AG04450 (cell line): ENCODE measurements at regions of chr10 and their contacts with region 1.

Region 1: DNA sequence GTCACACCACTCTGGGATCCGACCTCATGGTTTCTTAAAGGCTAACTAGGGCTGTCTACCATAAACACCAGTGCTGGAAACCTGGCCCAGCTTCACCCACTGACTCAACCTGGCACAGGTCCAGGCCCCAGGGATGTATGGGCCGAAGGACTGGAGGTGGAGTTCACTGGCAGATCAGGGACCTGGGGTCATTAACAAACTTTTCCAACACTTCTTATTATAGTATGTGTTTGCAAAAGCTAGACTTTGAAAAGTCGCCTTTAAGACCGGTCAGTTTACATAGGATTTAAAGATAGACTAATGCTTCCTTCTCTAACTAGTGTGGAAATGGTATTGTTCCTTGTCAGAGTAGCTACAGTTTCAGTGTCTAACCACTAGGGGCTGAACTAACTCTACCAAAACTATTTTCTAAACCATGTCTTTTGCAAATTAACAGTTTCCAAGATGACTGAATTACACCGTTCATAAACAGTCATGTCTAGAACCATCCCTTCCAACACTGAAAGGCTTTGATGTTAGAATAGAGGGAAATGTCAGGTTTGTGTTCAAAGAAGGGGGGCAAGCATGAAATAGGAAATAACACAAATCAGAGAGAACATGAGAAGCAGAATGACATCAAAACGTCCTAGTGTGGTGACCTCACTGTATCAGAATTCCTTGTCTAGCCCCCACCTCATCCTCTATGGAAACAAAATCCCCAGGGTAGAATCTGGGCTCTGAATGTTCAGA is 29.7 kb downstream of the STN1 start:
- DNase-seq: peak; percentile 73
- H3K4me3 ChIP-seq: no peak overlapping the region
- H3K27ac ChIP-seq: peak overlapping the region; percentile 33
- H3K27me3 ChIP-seq: no peaks in the 10 kb centered on the region
- CTCF ChIP-seq: peak; percentile 92

Region 2: GRCh38 chr10:102083541-102083940 is 1804.7 kb before region 1 on chr10:
- CTCF ChIA-PET with region 1: no interaction called
- POLR2A ChIA-PET with region 1: no interaction called
- DNase-seq: no peak
- H3K4me3 ChIP-seq: no peak overlapping the region
- H3K27ac ChIP-seq: no peak overlapping the region
- H3K27me3 ChIP-seq: no peaks in the 10 kb centered on the region
- CTCF ChIP-seq: no peak

Region 3: DNA sequence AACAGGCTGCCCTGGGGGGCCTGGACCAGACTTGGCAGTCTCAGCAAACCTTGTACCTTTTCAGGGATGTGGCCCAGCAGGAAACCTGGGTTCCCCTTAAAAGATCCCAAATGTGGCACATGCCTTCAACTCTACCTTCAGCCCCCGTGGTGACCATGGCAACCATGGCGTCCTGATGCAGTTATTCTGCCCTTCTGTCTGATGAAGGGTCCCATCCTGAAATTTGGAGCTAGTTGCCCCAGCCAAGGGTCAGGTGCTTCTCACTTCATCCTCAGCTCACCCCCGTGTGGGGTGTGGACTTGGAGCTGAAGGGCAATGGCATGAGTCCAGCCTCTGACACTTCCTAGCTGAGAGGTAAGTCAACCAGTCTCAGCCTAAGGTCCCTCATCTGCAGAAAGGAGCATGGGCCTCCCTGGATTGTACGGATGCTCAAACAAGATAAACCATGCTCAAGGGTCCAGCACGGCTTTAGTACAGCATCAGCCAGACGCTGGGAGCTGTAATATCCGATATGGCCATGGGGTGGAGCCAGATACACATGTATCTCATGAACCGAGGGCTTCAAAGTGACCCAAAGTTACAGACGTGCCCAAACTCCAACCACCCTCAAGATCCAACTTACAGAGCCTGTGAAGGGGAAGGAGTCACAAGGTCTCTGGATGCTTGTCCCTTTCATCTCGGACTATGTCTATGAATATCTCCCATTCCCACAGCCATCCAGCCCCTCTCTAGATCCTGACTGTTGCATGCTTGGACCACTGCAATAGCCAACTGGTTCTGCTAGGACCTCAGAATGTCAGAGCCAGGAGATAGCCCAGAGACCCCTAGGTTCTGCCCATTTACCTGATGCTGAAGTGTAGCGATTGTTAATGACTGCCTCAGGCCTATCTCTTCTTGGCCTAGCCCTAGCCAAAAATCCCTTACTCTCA is 175.4 kb before region 1 on chr10:
- CTCF ChIA-PET with region 1: interaction called, 186 read pairs
- POLR2A ChIA-PET with region 1: no interaction called
- DNase-seq: peak; percentile 58
- H3K4me3 ChIP-seq: no peak overlapping the region
- H3K27ac ChIP-seq: no peak overlapping the region
- H3K27me3 ChIP-seq: no peaks in the 10 kb centered on the region
- CTCF ChIP-seq: peak; percentile 85

Region 4: DNA sequence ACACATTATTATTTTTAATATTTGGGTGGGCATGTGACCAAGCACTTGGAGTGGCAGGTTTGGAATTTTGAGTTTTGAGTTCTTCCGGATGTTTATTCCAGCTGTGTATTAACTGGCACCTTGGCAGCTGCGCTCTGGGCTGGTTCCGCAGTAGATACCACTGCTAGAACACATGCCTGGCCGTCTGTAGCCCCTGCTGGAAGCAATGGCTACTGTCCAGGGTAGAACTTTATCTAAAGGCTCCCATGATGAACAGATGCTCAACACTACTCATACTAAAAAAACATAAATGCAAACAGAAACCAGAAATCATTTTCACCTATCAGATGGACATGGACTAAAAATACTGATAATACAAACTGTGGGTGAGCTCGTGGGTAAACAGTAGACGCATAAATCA is 13.5 kb before region 1 on chr10:
- CTCF ChIA-PET with region 1: interaction called, 28 read pairs
- POLR2A ChIA-PET with region 1: no interaction called
- DNase-seq: no peak
- H3K4me3 ChIP-seq: no peak overlapping the region
- H3K27ac ChIP-seq: no peak overlapping the region
- H3K27me3 ChIP-seq: no peaks in the 10 kb centered on the region
- CTCF ChIP-seq: peak; percentile 36

Region 5: DNA sequence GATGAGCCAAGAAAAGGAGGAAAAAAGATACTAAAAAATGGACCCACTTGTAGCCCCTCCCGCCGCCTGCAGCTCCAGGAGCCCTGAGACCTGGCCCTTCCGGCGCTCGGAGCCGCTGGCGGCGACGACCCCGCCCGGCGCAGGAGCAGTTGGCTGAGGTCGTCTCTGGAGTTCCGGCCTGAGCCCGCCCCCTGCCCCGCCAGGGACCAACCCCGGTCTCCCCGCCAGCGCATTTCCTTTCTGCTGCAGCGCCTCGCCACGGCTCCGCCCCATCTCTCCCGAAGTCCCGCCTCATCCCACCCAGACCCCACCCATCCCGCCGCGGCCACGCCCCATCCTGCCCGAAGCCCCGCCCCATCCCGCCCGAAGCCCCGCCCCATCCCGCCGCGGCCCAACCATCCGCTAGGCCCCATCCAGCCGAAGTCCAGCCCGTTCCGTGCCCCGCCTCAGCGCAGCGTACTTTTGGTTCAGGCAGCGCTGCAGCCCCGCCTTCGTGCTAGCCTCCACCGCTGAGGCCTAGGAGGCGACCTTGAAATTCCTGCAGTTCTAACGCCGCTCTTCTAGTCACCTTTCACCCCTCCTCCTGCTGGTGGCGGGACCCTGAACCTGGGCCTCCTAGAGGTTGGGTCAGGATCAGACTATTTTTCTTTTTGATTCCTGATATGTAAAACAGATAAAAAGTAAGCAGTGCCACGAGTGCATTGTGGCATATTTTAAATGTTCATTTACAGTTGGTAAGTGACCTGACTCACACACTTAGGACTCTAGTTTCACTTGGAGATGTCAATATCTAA is 30.0 kb after region 1 on chr10 and contains the start of gene STN1:
- CTCF ChIA-PET with region 1: interaction called, 13 read pairs
- POLR2A ChIA-PET with region 1: interaction called, 3 read pairs
- DNase-seq: peak; percentile 92
- H3K4me3 ChIP-seq: peak within 1 kb of the TSS; percentile 86
- H3K27ac ChIP-seq: peak within 1 kb of the TSS; percentile 89
- H3K27me3 ChIP-seq: no peaks in the 10 kb centered on the region
- CTCF ChIP-seq: peak; percentile 11; the same call in 1 of the 2 replicates
- polyA plus RNA-seq, gene STN1: 17.1 and 19.0 TPM in 2 replicates

Region 6: DNA sequence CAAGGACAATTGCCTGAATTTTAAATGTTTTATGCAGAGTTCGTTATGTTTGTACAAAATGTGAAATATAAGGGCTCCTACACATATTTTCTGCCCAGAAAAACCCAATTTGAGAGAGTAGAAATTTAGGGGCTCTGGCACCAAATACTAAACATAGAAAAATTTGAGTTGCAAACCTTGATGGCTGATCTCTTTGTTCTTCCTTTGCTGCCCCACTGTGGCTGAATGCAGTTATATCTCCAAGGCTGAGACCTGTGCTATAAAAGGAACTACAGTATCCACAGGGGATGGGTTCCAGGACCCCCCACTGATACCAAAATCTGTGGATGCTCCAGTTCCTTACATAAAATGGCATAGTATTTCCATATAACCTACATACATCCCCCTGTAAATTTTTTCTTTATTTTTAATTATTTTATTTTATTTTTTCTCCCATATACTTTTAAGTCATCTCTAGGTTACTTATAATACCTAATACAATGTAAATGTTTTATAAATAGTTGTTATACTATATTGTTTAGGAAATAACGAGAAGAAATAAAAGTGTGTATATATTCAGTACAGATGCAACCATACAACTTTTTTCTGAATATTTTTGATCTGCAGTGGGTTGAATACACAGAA is 321.4 kb after region 1 on chr10:
- CTCF ChIA-PET with region 1: interaction called, 20 read pairs
- POLR2A ChIA-PET with region 1: no interaction called
- DNase-seq: no peak
- H3K4me3 ChIP-seq: no peak overlapping the region
- H3K27ac ChIP-seq: no peak overlapping the region
- H3K27me3 ChIP-seq: peaks cover 9% of the 10 kb centered on the region
- CTCF ChIP-seq: peak; percentile 68